Activated CD4-positive, alpha-beta T cell treated with anti-CD3 and anti-CD28 coated beads for 36 hours (primary cell): ENCODE measurements at regions of chr4 and their contacts with region 1.

Region 1: GRCh38 chr4:112231779-112232713 is at the start of gene AP1AR:
- DNase-seq: peak; percentile 87
- ATAC-seq: peak; percentile 60
- H3K4me3 Mint-ChIP-seq: peak within 1 kb of the TSS; percentile 79
- H3K27ac Mint-ChIP-seq: peak within 1 kb of the TSS; percentile 91
- H3K4me1 Mint-ChIP-seq: peaks cover 28% of the 10 kb centered on the region
- H3K27me3 Mint-ChIP-seq: no peaks in the 10 kb centered on the region
- total RNA-seq, gene AP1AR: 15.8 to 16.5 TPM

Region 2: GRCh38 chr4:112075129-112075753 is 156.8 kb before region 1 on chr4:
- CTCF ChIA-PET with region 1: no interaction called
- POLR2A ChIA-PET with region 1: no interaction called
- intact Hi-C with region 1: loop called in 1 of 2 experiments (anchors 1 kb)
- DNase-seq: peak; percentile 33
- ATAC-seq: peak; percentile 74
- H3K4me3 Mint-ChIP-seq: no peak overlapping the region
- H3K27ac Mint-ChIP-seq: no peak overlapping the region
- H3K4me1 Mint-ChIP-seq: no peaks in the 10 kb centered on the region
- H3K27me3 Mint-ChIP-seq: peaks cover 4% of the 10 kb centered on the region

Region 3: DNA sequence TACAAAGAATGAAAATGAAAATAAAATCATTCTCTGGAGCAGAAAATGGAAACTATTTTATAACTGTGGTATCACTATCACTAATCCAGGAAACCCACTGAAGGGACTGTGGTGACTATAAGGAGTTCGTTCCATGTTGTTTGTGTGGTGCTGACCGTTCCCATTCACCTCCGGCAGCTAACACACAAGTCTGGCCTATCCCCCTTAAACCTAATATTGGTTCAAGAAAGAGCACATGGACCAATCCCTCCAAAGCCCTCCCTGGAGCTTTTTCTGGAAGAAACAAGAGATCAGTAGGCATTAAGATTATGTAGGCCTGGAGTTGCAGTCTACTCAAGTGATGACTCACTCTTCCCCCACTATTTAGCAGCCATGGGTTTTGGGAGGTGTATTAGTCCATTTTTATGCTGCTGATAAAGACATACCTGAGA is 112.7 kb before region 1 on chr4:
- CTCF ChIA-PET with region 1: no interaction called
- POLR2A ChIA-PET with region 1: no interaction called
- intact Hi-C with region 1: loop called (anchors 1 kb)
- DNase-seq: peak; percentile 24
- ATAC-seq: peak; percentile 87
- H3K4me3 Mint-ChIP-seq: no peak overlapping the region
- H3K27ac Mint-ChIP-seq: peak overlapping the region; percentile 83
- H3K4me1 Mint-ChIP-seq: peaks cover 15% of the 10 kb centered on the region
- H3K27me3 Mint-ChIP-seq: no peaks in the 10 kb centered on the region

Region 4: GRCh38 chr4:112199040-112199439 is 33.0 kb before region 1 on chr4:
- CTCF ChIA-PET with region 1: interaction called, 5 read pairs
- POLR2A ChIA-PET with region 1: interaction called, 5 read pairs
- intact Hi-C with region 1: loop called (anchors 1 to 2 kb)
- DNase-seq: no peak
- ATAC-seq: peak; percentile 10
- H3K4me3 Mint-ChIP-seq: no peak overlapping the region
- H3K27ac Mint-ChIP-seq: peak overlapping the region; percentile 42
- H3K4me1 Mint-ChIP-seq: peaks cover 20% of the 10 kb centered on the region
- H3K27me3 Mint-ChIP-seq: peaks cover 4% of the 10 kb centered on the region

Region 5: DNA sequence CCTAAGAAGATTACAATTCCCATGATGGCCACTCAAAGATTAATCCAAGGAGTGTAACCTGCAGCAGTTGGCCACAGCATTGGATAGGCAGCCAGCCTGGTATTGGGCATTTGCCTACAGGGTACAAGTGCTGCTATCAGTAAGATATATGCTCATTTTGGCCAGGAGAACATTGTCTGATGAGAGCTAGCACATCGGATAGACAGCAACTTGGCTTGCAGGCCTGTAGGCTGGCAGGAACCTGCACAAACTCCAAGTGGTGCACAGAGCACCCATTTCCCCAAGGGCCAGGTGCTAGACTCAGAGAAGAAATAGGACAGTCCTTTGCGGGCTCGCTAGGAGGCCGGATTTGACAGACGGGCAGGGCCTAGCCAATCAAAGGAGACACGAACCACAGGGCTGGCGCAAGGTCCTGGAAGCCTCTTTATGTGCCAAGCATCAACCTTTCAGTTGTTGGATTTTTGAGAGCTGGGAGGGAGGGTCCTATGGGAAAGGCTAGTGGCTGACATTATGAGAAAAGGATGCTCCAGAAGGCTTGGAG is 12.2 kb before region 1 on chr4:
- CTCF ChIA-PET with region 1: interaction called, 15 read pairs
- POLR2A ChIA-PET with region 1: no interaction called
- intact Hi-C with region 1: loop called in 1 of 2 experiments (anchors 2 kb)
- DNase-seq: no peak
- ATAC-seq: no peak
- H3K4me3 Mint-ChIP-seq: no peak overlapping the region
- H3K27ac Mint-ChIP-seq: no peak overlapping the region
- H3K4me1 Mint-ChIP-seq: peaks cover 3% of the 10 kb centered on the region
- H3K27me3 Mint-ChIP-seq: no peaks in the 10 kb centered on the region

Region 6: DNA sequence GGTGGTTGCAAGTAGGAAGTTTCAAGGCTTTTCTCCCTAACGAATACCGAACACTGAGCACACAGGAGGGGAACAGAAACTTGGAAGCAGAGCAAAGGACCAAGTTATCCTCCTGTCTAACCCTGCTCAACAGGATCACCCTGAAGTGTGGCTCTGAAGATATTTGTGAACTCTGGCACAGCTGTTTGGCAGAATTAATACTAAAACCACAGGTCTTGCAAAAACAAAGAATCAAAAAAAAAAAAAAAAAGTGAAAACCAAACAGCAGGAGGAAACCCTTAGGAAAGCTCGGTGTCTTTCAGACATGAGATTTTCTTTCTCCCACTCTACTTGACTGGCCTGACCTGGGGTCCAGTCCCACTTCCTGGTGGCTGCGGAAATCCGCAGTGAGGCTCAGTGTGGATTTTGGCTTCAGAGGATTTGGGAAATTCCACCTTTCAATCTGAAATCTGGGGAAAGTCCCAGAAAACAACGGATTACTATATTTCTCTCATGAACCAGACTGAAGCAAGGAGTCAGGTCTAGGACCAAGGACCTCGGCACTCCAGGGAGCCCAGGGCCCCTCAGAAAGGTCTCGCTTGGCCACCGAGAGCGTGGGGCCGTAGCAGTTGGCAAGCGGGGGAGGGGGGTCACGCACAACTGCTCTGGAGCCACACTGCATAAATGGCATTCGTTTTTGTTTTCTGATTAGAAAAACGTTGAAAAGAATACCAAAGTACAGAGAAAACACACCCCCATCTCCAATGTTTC is 52.8 kb after region 1 on chr4:
- CTCF ChIA-PET with region 1: interaction called, 6 read pairs
- POLR2A ChIA-PET with region 1: no interaction called
- intact Hi-C with region 1: loop called (anchors 1 to 2 kb)
- DNase-seq: peak; percentile 43
- ATAC-seq: no peak
- H3K4me3 Mint-ChIP-seq: peak overlapping the region; percentile 96
- H3K27ac Mint-ChIP-seq: peak overlapping the region; percentile 96
- H3K4me1 Mint-ChIP-seq: peaks cover 73% of the 10 kb centered on the region
- H3K27me3 Mint-ChIP-seq: no peaks in the 10 kb centered on the region

Region 7: DNA sequence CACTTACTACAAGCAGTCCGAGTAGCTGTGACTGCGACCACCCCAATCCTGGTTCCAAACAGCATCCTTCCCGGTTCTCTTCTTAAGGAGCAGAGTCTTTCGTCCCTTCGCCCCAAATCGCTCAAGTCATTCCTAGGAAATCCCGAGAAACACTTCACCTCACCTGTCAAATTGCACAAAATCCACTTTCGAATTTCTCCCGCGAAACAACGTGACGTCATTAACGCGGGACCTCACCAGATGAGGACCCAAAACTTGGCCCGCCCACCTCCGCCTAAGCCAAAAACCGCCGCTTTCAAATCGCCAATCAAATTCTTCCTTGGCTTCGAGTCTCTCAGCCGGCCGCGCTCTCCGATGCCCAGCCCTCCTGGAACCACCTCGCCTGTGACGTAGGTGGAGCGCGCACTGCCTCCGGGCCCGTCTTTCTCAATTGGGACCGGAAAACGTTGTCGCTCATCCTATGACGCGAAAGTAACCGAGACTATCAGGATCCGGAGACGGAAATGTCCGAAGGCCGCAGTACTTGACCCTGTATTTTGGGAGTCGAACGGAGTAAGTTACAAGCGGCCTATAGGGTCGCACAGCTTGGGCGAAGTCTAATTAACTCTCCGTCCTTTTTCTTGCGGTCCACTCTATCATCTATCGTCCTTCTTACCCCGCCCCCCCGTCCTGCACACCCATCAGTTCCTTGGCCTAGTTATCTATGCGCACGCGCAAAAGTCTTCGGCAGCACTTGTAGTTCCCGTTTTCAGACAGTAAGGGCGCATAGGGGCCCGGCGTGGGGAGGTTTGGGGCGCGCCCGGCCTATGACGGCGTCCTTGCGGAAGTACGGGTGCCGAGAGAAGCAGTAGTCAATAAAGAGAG is 404.9 kb after region 1 on chr4 and contains the starts of genes LARP7 and ZGRF1:
- CTCF ChIA-PET with region 1: no interaction called
- POLR2A ChIA-PET with region 1: no interaction called
- intact Hi-C with region 1: loop called (anchors 1 kb)
- DNase-seq: peak; percentile 99
- ATAC-seq: peak; percentile 95
- H3K4me3 Mint-ChIP-seq: no peak within 1 kb of the TSS
- H3K27ac Mint-ChIP-seq: peak within 1 kb of the TSS; percentile 68
- H3K4me1 Mint-ChIP-seq: peaks cover 23% of the 10 kb centered on the region
- H3K27me3 Mint-ChIP-seq: no peaks in the 10 kb centered on the region
- total RNA-seq, gene LARP7: 46.5 to 47.1 TPM
- total RNA-seq, gene ZGRF1: 38.4 to 45.0 TPM